Mammary epithelial cell (primary cell): ENCODE measurements at regions of chr1 and their contacts with region 1.

Region 1: DNA sequence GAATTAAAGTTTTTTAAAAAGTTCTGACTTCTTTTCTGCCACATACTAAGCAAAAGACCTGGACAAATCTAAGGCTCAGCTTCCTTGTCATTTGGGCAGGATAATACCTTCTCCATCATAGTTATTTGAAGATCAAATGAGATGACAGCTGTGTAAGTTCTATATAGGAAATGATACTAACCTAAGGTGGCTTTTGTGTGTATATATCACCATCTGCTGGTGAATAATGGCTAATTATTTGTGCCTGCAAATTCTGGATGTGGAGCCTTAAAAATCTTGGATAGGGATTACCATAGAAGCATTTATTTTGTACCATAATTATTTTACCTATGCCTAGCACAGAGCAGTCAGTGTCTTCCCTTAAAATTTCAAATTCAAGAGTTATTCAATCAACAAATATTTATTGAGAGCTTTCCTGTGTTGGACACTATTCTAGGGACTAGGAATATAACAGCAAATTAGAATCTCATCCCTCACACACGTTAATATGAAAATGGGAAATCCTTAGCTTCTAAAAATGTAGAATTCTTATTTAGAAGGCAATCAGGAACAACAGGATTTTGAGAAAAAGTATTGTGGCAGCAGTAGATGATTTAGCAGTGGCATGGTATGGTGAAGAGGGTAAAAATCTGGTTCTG is 89.8 kb downstream of the TMEM200B start:
- DNase-seq: peak; percentile 35
- H3K4me3 ChIP-seq: no peak overlapping the region
- H3K27ac ChIP-seq: no peak overlapping the region
- H3K4me1 ChIP-seq: no peaks in the 10 kb centered on the region
- H3K27me3 ChIP-seq: no peaks in the 10 kb centered on the region
- CTCF ChIP-seq: peak; percentile 58 to 65

Region 2: DNA sequence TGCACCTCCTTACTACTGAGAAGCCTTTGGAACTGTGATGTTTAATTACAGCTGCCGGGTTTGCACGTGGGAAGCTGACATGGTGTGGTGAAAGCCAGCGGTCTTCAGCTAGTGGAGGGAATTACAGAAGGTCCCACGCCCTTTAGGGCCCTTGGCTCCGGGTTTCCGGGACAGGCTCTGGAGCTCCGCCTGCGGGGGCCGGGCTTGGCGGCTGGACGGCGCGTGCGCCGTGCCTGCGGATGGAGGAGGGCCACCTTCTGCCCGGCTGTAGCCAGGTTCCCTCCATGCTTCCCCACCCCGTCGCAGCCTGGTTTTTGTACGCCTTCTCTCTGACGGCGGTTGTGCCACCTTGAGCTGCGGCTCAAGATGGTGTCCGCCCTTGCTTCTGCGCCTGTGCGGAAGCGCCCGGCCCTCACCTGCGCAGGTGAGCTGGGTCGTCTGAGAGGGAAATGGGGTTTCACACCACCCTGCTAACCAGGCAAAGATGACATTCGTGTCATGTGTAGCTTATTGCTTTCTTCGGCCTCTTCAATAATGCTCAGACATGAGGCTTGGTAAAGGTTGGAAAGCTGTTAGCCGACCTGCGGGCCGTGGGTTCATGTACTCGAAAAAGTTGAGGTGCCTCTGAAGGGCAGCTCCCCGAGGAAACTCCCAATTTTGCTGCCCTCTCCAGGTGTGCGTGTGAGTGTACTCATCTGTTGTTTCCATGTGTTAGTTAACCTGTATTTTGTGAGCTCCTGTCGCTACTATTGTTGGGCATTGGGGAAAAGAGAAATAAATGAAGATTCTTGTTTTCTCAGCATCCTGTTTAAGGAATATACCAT is 258.6 kb before region 1 on chr1:
- CTCF ChIA-PET with region 1: no interaction called
- dilution Hi-C with region 1: no loop called
- in situ Hi-C with region 1: loop called in 1 of 2 experiments (anchors 25 kb)
- intact Hi-C with region 1: no loop called
- DNase-seq: peak; percentile 68
- H3K4me3 ChIP-seq: peak overlapping the region; percentile 14 to 41 (median 38)
- H3K27ac ChIP-seq: no peak overlapping the region
- H3K4me1 ChIP-seq: peaks cover 6% of the 10 kb centered on the region
- H3K27me3 ChIP-seq: no peaks in the 10 kb centered on the region
- CTCF ChIP-seq: peak in 1 of 2 donors; percentile 11